MCF 10A (cell line): ENCODE measurements at regions of chr1 and their contacts with region 1.

Region 1: DNA sequence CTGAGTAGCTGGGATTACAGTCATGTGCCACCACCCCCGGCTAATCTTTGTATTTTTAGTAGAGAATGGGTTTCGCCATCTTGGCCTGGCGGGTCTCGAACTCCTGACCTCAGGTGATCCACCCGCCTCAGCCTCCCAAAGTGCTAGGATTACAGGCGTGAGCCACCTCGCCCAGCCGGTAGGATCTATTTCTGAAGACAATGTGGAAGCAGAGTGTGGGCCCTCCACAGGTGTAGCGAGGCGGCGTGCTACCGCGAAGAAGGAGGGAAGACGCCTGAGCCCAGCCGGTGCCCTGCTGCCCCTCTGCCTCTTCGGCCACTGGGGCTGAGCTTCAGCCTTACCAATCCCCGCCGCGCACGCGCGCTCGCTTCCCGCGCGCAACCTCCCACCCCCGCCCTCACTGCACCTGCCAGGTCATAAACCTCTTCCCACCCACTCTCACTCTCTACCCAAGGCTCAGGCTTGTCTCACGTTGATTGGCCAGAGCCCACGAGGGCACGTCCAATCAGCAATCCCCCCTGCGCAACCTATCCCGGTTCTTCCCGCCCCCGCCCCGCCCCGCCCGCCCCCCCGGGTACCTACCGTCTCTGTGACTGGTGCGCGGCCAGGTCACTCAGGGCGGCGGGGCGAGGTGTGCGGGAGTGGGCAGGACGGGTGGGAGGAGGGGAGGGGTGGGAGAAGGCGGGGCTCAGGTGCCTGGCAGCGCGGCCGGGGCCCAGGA is 409 bp upstream of the HOOK1 start:
- DNase-seq: peak; percentile 98
- H3K4me3 Mint-ChIP-seq: no peak overlapping the region
- H3K27ac Mint-ChIP-seq: no peak overlapping the region
- H3K4me1 Mint-ChIP-seq: peaks cover 5% of the 10 kb centered on the region
- H3K27me3 Mint-ChIP-seq: no peaks in the 10 kb centered on the region
- CTCF ChIP-seq: no peak

Region 2: DNA sequence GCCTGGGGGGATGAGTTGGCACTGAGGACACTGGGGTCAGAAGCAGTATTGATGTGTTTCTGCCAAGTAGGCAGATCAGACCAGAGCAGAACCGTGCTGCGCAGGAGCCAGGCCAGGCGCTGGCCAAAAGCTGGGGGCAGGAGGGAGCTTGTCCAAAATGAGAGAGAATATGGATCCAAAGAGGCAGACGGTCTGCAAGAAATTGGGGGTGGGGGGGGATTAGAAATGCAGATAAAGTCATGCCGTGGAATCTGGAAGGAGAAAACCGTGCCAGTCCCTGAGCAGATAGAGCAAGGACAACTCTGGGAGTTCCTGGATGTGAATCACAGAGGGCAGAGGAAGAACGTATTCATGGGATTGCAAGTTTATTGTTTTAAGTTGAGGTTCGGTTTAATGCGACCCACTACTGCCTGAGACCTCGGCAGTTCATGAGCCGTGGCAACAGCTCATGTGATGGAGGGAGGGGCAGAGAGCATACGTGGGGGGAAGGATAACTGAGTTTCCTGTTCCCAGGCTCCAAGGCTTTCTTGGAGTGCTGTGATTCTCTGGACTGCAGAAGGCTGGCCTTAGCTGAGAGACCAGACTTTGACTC is 293.4 kb before region 1 on chr1:
- CTCF ChIA-PET with region 1: no interaction called
- POLR2A ChIA-PET with region 1: no interaction called
- intact Hi-C with region 1: no loop called
- DNase-seq: no peak
- H3K4me3 Mint-ChIP-seq: no peak overlapping the region
- H3K27ac Mint-ChIP-seq: no peak overlapping the region
- H3K4me1 Mint-ChIP-seq: peaks cover 7% of the 10 kb centered on the region
- H3K27me3 Mint-ChIP-seq: no peaks in the 10 kb centered on the region
- CTCF ChIP-seq: no peak

Region 3: DNA sequence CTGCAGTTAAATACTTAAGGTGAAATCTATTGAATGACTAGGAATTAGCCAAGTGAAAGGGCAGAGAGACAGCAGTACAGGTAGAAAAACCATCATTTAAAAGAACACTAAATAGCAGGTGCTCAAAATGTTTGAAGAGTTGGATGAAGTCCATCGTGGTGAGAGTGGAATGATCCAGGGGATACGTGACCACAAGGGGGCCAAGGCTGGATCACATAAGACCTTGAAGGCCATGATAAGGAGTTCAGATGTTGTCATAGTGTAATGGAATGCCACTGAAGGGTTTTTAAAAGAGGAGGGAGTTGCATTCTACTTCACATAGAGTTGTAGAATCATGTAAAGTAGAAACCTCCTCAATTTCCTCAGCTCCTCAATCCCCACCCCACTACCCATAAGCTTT is 34.4 kb before region 1 on chr1:
- CTCF ChIA-PET with region 1: no interaction called
- POLR2A ChIA-PET with region 1: interaction called, 10 read pairs
- intact Hi-C with region 1: no loop called
- DNase-seq: no peak
- H3K4me3 Mint-ChIP-seq: no peak overlapping the region
- H3K27ac Mint-ChIP-seq: no peak overlapping the region
- H3K4me1 Mint-ChIP-seq: no peaks in the 10 kb centered on the region
- H3K27me3 Mint-ChIP-seq: no peaks in the 10 kb centered on the region
- CTCF ChIP-seq: peak; percentile 9

Region 4: GRCh38 chr1:59804301-59804700 is 10.0 kb before region 1 on chr1:
- CTCF ChIA-PET with region 1: interaction called, 3 read pairs
- POLR2A ChIA-PET with region 1: interaction called, 10 read pairs
- intact Hi-C with region 1: no loop called
- DNase-seq: no peak
- H3K4me3 Mint-ChIP-seq: no peak overlapping the region
- H3K27ac Mint-ChIP-seq: no peak overlapping the region
- H3K4me1 Mint-ChIP-seq: no peaks in the 10 kb centered on the region
- H3K27me3 Mint-ChIP-seq: no peaks in the 10 kb centered on the region
- CTCF ChIP-seq: no peak

Region 5: GRCh38 chr1:59833022-59833421 is 18.7 kb after region 1 on chr1:
- CTCF ChIA-PET with region 1: interaction called, 3 read pairs
- POLR2A ChIA-PET with region 1: interaction called, 15 read pairs
- intact Hi-C with region 1: no loop called
- DNase-seq: no peak
- H3K4me3 Mint-ChIP-seq: no peak overlapping the region
- H3K27ac Mint-ChIP-seq: no peak overlapping the region
- H3K4me1 Mint-ChIP-seq: peaks cover 6% of the 10 kb centered on the region
- H3K27me3 Mint-ChIP-seq: no peaks in the 10 kb centered on the region
- CTCF ChIP-seq: no peak

Region 6: GRCh38 chr1:59866462-59866861 is 52.1 kb after region 1 on chr1:
- CTCF ChIA-PET with region 1: no interaction called
- POLR2A ChIA-PET with region 1: no interaction called
- intact Hi-C with region 1: no loop called
- DNase-seq: no peak
- H3K4me3 Mint-ChIP-seq: no peak overlapping the region
- H3K27ac Mint-ChIP-seq: no peak overlapping the region
- H3K4me1 Mint-ChIP-seq: no peaks in the 10 kb centered on the region
- H3K27me3 Mint-ChIP-seq: no peaks in the 10 kb centered on the region
- CTCF ChIP-seq: no peak

Region 7: DNA sequence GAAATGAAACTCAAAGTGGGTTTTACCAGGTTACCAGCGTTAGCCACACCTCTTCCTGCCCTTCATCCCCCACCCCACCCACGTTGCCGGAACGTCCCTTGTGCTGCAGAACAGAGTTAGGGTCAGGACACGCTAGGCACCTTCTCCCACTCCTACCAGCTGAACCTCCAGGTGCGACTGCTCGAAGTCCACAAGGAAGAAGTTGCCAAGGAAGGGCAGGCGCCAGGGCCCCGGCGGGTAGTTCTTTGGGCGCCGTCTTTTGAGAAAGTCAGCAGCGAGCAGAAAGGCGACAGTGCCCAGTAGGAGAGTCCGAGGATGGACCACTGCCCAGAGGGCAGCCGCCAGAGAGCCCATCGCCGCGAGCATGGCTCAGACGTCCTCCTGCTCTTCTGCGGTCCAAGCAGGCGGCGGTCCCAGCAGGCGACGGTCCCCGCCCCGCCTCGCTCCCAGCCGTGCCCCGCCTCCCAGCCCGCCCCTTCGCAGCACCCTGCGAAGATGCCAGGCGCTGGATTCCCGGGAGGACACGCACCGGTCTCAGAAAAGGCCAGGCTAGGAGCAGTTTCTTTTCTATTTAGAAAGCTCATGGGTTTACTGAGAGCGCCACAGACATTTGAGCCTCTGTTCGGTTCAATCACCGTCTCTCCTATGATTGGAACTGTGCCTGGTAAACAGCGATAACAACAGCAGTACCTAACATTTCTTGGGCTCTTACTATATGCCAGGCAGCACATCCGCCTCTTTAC is 112.2 kb after region 1 on chr1 and contains the start of gene CYP2J2:
- CTCF ChIA-PET with region 1: no interaction called
- POLR2A ChIA-PET with region 1: no interaction called
- intact Hi-C with region 1: loop called (anchors 5 kb)
- DNase-seq: peak; percentile 59
- H3K4me3 Mint-ChIP-seq: peak within 1 kb of the TSS; percentile 71
- H3K27ac Mint-ChIP-seq: no peak within 1 kb of the TSS
- H3K4me1 Mint-ChIP-seq: no peaks in the 10 kb centered on the region
- H3K27me3 Mint-ChIP-seq: peaks cover 57% of the 10 kb centered on the region
- CTCF ChIP-seq: no peak
- total RNA-seq, gene CYP2J2: 0.25 and 0.42 TPM in 2 replicates